ENCODE measurements at regions of chr6 and their contacts with region 1.

Region 1: DNA sequence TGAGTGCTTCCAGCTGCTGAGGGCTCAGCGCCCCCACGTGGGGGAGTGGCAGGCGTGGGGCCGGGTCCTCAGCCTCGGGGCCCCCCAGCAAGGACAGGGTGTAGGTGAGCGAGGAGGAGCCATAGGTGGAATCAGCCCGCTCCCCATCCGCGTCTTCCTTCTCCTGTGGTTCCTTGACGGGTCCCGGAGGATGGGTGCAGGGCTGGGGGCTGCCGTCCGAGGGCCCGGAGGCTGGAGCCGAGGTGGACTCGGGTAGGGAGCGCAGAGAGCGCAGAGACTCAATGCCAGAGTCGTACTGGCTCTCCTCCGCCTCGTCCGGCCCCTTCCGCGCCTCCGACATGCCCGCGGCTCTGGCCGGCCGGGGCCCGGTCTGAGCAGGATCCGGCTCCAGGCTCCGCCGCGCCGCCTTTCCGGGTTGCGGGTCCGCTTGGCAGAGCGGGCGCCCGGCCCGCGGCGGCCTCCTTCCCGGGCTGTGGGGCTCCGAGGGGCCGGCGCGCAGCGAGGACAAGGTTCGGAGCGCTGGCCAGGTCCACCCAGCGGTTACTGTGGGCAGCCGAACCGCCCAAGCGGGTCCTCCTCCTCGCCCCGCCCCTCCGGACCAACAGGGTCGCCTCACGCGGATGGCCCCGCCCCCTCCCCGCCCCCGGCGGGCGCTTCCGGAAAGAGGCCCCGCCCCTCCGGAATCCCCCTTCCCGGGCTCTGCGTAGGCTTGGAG is at the start of gene NFKBIE:
- DNase-seq: peak; percentile 87 to 99 (median 93)
- ATAC-seq: peak; percentile 92
- H3K4me3 ChIP-seq: peak within 1 kb of the TSS; percentile 85
- H3K4me3 Mint-ChIP-seq: peak within 1 kb of the TSS; percentile 87 to 99 (median 94)
- H3K27ac ChIP-seq: peak within 1 kb of the TSS; percentile 97
- H3K27ac Mint-ChIP-seq: peak within 1 kb of the TSS; percentile 90 to 96 (median 92)
- H3K4me1 ChIP-seq: peaks cover 30% of the 10 kb centered on the region in 2 donors
- H3K4me1 Mint-ChIP-seq: peaks cover 32 to 57% (median 43%) of the 10 kb centered on the region in 7 donors
- H3K27me3 ChIP-seq: peaks cover 0 to 8% of the 10 kb centered on the region in 2 donors
- H3K27me3 Mint-ChIP-seq: peaks cover 15 to 22% (median 16%) of the 10 kb centered on the region in 5 donors
- total RNA-seq, gene NFKBIE: 8.3 to 53.4 (median 29.4) TPM

Region 2: DNA sequence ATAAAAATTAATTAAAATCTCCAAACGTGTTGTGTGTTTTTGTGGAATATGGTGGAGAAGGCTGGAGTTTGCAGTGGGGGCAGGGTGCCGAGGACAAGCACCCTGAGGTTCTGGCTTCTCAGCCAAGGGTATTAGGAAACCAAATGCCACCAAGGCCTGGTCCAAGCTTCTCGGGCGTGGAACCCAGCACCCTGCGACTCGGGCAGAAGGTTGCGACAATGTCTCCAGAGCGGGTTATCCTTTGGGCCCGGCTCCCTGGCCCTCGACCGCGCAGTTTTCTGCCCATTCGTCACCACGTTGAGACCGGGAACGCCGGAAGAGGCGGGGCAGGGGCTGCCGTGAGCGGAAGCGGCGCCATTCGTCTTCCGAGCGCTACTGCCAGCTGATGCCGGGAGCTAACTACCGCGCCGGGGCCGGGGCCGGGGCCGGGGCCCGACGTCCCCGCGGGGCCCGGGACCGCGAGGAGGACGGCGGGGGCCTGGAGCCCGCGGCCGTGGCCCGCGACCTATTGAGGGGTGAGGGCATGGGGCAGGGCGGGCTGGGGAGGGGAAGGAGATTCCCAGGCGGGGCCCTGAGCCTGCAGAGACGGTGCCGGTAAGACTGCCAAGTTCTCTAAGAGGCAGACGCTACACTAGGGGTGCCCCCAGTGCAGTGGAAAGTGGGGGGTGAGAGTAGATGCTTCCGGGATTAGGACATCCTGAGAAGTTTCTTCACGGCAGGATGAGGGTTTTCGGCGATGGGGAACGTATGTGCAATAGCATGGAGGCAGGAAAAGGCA is 1243.7 kb before region 1 on chr6 and contains the start of gene RRP36:
- CTCF ChIA-PET with region 1: no interaction called
- POLR2A ChIA-PET with region 1: no interaction called
- intact Hi-C with region 1: no loop called
- DNase-seq: peak; percentile 33 to 76 (median 51)
- ATAC-seq: peak; percentile 88
- H3K4me3 ChIP-seq: peak within 1 kb of the TSS; percentile 89
- H3K4me3 Mint-ChIP-seq: peak within 1 kb of the TSS; percentile 95 to 99 (median 98)
- H3K27ac ChIP-seq: peak within 1 kb of the TSS; percentile 81
- H3K27ac Mint-ChIP-seq: peak within 1 kb of the TSS; percentile 74 to 97 (median 93)
- H3K4me1 ChIP-seq: peaks cover 11 to 19% of the 10 kb centered on the region in 2 donors
- H3K4me1 Mint-ChIP-seq: peaks cover 23 to 60% (median 41%) of the 10 kb centered on the region in 7 donors
- H3K27me3 ChIP-seq: no peaks in the 10 kb centered on the region
- H3K27me3 Mint-ChIP-seq: no peaks in the 10 kb centered on the region
- total RNA-seq, gene RRP36: 25.4 to 66.3 (median 48.4) TPM

Region 3: DNA sequence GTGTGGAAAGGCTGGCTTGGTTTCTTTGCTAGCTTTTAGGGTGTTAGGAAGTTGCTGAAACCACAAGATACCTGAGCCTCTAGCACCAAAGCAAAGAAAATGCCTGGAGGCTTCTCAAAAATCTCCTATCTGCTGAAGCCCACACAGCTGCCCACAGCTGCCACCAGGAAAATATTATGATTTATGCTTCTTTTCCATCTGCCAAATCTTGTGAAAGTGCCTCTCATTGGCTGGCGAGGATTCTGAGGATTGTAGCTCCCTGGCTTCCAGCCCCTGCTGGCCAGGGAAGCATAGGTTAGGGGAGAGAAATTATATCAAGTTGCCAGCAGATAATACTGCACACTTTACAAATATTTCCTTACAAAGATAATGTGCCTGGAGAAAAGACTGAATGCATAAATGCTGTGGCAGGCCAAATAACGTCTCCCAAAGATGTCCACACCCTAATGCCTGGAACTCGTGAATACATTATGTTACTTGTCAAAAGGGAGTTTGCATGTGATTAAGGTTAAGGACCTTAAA is 236.3 kb before region 1 on chr6:
- CTCF ChIA-PET with region 1: no interaction called
- POLR2A ChIA-PET with region 1: no interaction called
- intact Hi-C with region 1: no loop called
- DNase-seq: no peak
- ATAC-seq: no peak
- H3K4me3 ChIP-seq: no peak overlapping the region
- H3K4me3 Mint-ChIP-seq: no peak overlapping the region
- H3K27ac ChIP-seq: no peak overlapping the region
- H3K27ac Mint-ChIP-seq: no peak overlapping the region
- H3K4me1 ChIP-seq: no peaks in the 10 kb centered on the region
- H3K4me1 Mint-ChIP-seq: peaks cover 0 to 6% (median 0%) of the 10 kb centered on the region in 7 donors
- H3K27me3 ChIP-seq: no peaks in the 10 kb centered on the region
- H3K27me3 Mint-ChIP-seq: peaks cover 4 to 35% (median 13%) of the 10 kb centered on the region in 5 donors

Region 4: DNA sequence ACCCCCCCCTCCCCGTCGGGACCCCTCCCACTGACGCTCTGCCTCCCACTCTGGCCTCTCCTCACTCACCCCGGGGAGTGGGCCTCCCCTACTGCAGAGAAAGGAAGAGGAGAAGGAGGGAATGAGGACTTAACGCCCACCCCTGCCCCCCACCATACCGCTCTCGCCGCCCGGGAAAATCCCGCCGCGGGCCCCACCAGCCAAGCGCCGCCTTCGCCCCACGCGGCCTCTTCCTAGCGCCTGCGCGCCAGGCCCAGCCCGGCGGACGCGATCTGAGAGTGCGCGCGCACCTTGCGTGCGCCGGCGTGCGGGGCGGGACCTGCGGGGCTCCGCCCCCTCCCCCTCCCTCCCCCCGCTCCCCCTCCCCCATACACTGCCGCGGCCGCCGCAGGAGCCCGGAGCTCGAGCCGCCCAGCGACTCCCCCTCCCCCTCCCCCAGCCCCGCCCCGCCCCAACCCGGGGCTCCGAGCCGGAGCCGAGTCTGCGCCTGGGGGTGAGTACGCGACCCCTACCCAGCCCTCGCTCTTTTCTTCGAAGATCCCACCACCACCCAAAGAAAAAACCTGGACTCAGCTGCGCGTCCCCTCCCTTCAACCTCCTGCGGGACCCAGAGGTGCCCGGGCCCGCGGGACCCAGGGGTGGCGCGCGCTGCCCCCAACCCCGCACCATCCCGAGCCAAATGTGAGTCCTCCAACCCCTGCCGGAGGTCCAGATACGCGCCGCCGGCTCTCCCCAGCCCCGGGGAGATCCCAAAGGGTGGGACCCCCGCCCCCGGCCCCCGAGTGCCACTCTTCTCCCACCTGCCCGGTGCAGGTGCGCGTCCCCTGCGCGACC is 137.8 kb before region 1 on chr6 and contains the starts of genes MRPL14 and TMEM63B:
- CTCF ChIA-PET with region 1: no interaction called
- POLR2A ChIA-PET with region 1: no interaction called
- intact Hi-C with region 1: loop called in 1 of 2 experiments (anchors 1 kb)
- DNase-seq: peak; percentile 82 to 97 (median 90)
- ATAC-seq: peak; percentile 91
- H3K4me3 ChIP-seq: peak within 1 kb of the TSS; percentile 71
- H3K4me3 Mint-ChIP-seq: peak within 1 kb of the TSS; percentile 91 to 99 (median 96)
- H3K27ac ChIP-seq: peak within 1 kb of the TSS; percentile 97
- H3K27ac Mint-ChIP-seq: peak within 1 kb of the TSS; percentile 87 to 99 (median 96)
- H3K4me1 ChIP-seq: peaks cover 36 to 41% of the 10 kb centered on the region in 2 donors
- H3K4me1 Mint-ChIP-seq: peaks cover 46 to 75% (median 57%) of the 10 kb centered on the region in 7 donors
- H3K27me3 ChIP-seq: no peaks in the 10 kb centered on the region
- H3K27me3 Mint-ChIP-seq: no peaks in the 10 kb centered on the region
- total RNA-seq, gene MRPL14: 12.6 to 58.3 (median 15.8) TPM
- total RNA-seq, gene TMEM63B: 16.2 to 21.4 (median 18.1) TPM

Region 5: GRCh38 chr6:44221291-44221960 is 43.7 kb before region 1 on chr6:
- CTCF ChIA-PET with region 1: interaction called, 6 read pairs
- POLR2A ChIA-PET with region 1: interaction called, 8 read pairs
- intact Hi-C with region 1: loop called (anchors 1 kb)
- DNase-seq: peak; percentile 56 to 75 (median 71)
- ATAC-seq: peak; percentile 75
- H3K4me3 ChIP-seq: no peak overlapping the region
- H3K4me3 Mint-ChIP-seq: peak overlapping the region in 7 of 10 donors; percentile 27 to 93 (median 59)
- H3K27ac ChIP-seq: no peak overlapping the region
- H3K27ac Mint-ChIP-seq: peak overlapping the region in 5 of 9 donors; percentile 26 to 91 (median 48)
- H3K4me1 ChIP-seq: peaks cover 15 to 16% of the 10 kb centered on the region in 2 donors
- H3K4me1 Mint-ChIP-seq: peaks cover 6 to 48% (median 31%) of the 10 kb centered on the region in 7 donors
- H3K27me3 ChIP-seq: no peaks in the 10 kb centered on the region
- H3K27me3 Mint-ChIP-seq: peaks cover 0 to 18% (median 0%) of the 10 kb centered on the region in 5 donors

Region 6: GRCh38 chr6:44246663-44247337 is 18.4 kb before region 1 on chr6 and contains the start of gene HSP90AB1:
- CTCF ChIA-PET with region 1: interaction called, 7 read pairs
- POLR2A ChIA-PET with region 1: interaction called, 35 read pairs
- intact Hi-C with region 1: loop called (anchors 1 kb)
- DNase-seq: peak; percentile 78 to 98 (median 97)
- ATAC-seq: peak; percentile 90
- H3K4me3 ChIP-seq: peak within 1 kb of the TSS; percentile 99
- H3K4me3 Mint-ChIP-seq: peak within 1 kb of the TSS; percentile 94 to 99 (median 98)
- H3K27ac ChIP-seq: peak within 1 kb of the TSS; percentile 93
- H3K27ac Mint-ChIP-seq: peak within 1 kb of the TSS; percentile 96 to 100 (median 98)
- H3K4me1 ChIP-seq: peaks cover 15 to 19% of the 10 kb centered on the region in 2 donors
- H3K4me1 Mint-ChIP-seq: peaks cover 29 to 53% (median 44%) of the 10 kb centered on the region in 7 donors
- H3K27me3 ChIP-seq: no peaks in the 10 kb centered on the region
- H3K27me3 Mint-ChIP-seq: peaks cover 0 to 12% (median 0%) of the 10 kb centered on the region in 5 donors
- total RNA-seq, gene HSP90AB1: 345 to 750 (median 366) TPM

Region 7: DNA sequence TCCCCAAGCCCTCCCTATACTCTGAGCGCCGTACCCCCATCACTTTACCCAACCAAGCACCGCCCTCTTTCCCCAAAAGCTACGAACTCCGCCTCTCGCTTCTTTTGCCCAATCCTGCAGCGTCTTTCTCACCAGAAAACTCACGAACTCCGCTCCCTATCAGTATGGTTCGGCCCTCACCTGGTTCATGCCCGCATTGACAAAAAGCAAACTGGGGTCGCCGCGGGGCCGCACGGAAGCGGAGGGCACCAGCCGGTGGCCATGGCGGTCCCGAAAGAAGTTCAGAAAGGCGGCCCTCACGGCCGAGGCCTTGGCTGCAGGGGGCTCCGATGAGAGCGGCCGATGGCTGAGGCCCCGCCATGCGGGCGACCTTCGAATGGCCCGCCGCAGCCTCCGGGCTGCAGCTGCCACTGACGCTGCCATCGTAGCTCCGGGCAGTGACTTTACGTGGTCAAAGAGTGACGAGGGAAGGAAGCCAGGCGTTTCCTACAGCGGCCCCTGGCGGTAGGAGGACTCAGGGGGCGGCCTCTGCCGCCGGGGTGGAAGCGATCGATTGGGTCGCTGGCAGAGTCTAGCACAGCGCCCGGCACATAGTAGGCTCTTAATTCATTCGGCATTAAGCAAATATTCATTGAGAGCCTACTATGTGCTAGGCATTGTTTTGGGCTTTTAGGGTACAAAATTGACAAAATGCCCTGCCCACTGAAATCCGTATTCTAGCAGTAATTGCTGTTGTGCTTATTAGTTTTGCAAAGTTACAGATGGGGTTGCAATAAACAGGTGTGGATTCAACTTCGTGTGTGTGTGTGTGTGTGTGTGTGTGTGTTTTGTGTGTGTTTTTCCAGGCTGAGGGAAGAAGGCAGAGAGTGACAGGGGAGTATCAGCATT is 48.0 kb after region 1 on chr6 and contains the start of gene AARS2:
- CTCF ChIA-PET with region 1: interaction called, 5 read pairs
- POLR2A ChIA-PET with region 1: no interaction called
- intact Hi-C with region 1: loop called (anchors 1 to 2 kb)
- DNase-seq: peak; percentile 79 to 95 (median 88)
- ATAC-seq: peak; percentile 99
- H3K4me3 ChIP-seq: peak within 1 kb of the TSS; percentile 91
- H3K4me3 Mint-ChIP-seq: peak within 1 kb of the TSS; percentile 94 to 100 (median 96)
- H3K27ac ChIP-seq: peak within 1 kb of the TSS; percentile 89
- H3K27ac Mint-ChIP-seq: peak within 1 kb of the TSS; percentile 88 to 98 (median 94)
- H3K4me1 ChIP-seq: peaks cover 7 to 9% of the 10 kb centered on the region in 2 donors
- H3K4me1 Mint-ChIP-seq: peaks cover 16 to 32% (median 25%) of the 10 kb centered on the region in 7 donors
- H3K27me3 ChIP-seq: no peaks in the 10 kb centered on the region
- H3K27me3 Mint-ChIP-seq: peaks cover 0 to 13% (median 3%) of the 10 kb centered on the region in 5 donors
- total RNA-seq, gene AARS2: 13.5 to 29.8 (median 20.9) TPM

Region 8: GRCh38 chr6:44387346-44388133 is 122.4 kb after region 1 on chr6 and contains the start of gene CDC5L:
- CTCF ChIA-PET with region 1: no interaction called
- POLR2A ChIA-PET with region 1: no interaction called
- intact Hi-C with region 1: loop called (anchors 1 to 2 kb)
- DNase-seq: peak; percentile 80 to 96 (median 93)
- ATAC-seq: peak; percentile 88
- H3K4me3 ChIP-seq: peak within 1 kb of the TSS; percentile 71
- H3K4me3 Mint-ChIP-seq: peak within 1 kb of the TSS; percentile 91 to 100 (median 96)
- H3K27ac ChIP-seq: peak within 1 kb of the TSS; percentile 85
- H3K27ac Mint-ChIP-seq: peak within 1 kb of the TSS; percentile 91 to 99 (median 96)
- H3K4me1 ChIP-seq: peaks cover 17 to 29% of the 10 kb centered on the region in 2 donors
- H3K4me1 Mint-ChIP-seq: peaks cover 24 to 49% (median 46%) of the 10 kb centered on the region in 7 donors
- H3K27me3 ChIP-seq: no peaks in the 10 kb centered on the region
- H3K27me3 Mint-ChIP-seq: peaks cover 0 to 28% (median 0%) of the 10 kb centered on the region in 5 donors
- total RNA-seq, gene CDC5L: 17.4 to 25.4 (median 22.4) TPM

Region 9: DNA sequence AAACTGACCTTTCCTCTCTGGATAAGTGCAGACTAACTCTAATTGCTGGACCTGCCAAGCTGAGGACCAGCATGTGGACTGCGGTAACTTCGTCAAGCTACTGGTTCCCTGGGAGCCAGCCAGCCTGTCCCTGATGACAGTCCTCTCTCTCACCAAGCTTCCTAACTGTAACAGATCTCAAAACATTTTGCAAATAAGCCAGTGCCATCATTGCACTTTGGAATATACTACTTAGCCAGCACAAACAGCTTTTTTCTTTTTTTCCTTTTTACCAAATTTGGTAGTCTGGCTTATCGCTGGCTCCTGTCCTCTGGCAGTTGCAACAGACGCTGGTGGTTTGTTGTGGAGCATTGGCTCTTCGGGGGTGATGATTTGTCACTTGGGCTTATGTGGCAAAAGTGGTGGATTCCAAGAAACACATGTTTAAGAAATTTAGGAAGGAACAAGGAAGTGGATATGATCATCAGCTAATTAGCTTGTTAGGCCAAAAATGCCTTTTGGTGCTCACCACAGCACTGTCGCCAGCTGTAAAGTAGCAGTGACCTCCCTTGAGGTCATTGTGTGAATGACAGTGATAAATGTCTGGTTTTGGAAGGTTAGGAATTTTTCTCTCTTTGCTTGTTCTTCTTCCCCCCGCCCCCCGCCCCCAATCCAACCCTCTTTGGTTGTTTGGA is 1578.8 kb after region 1 on chr6:
- CTCF ChIA-PET with region 1: no interaction called
- POLR2A ChIA-PET with region 1: no interaction called
- intact Hi-C with region 1: no loop called
- DNase-seq: no peak
- ATAC-seq: no peak
- H3K4me3 ChIP-seq: no peak overlapping the region
- H3K4me3 Mint-ChIP-seq: no peak overlapping the region
- H3K27ac ChIP-seq: no peak overlapping the region
- H3K27ac Mint-ChIP-seq: no peak overlapping the region
- H3K4me1 ChIP-seq: no peaks in the 10 kb centered on the region
- H3K4me1 Mint-ChIP-seq: peaks cover 0 to 2% (median 0%) of the 10 kb centered on the region in 7 donors
- H3K27me3 ChIP-seq: no peaks in the 10 kb centered on the region
- H3K27me3 Mint-ChIP-seq: peaks cover 0 to 2% (median 0%) of the 10 kb centered on the region in 5 donors

Measured in naive thymus-derived CD4-positive, alpha-beta T cell (primary cell).